Activated naive CD4-positive, alpha-beta T cell treated with anti-CD3 and anti-CD28 coated beads for 36 hours (primary cell): ENCODE measurements at regions of chr17 and their contacts with region 1.

Region 1: DNA sequence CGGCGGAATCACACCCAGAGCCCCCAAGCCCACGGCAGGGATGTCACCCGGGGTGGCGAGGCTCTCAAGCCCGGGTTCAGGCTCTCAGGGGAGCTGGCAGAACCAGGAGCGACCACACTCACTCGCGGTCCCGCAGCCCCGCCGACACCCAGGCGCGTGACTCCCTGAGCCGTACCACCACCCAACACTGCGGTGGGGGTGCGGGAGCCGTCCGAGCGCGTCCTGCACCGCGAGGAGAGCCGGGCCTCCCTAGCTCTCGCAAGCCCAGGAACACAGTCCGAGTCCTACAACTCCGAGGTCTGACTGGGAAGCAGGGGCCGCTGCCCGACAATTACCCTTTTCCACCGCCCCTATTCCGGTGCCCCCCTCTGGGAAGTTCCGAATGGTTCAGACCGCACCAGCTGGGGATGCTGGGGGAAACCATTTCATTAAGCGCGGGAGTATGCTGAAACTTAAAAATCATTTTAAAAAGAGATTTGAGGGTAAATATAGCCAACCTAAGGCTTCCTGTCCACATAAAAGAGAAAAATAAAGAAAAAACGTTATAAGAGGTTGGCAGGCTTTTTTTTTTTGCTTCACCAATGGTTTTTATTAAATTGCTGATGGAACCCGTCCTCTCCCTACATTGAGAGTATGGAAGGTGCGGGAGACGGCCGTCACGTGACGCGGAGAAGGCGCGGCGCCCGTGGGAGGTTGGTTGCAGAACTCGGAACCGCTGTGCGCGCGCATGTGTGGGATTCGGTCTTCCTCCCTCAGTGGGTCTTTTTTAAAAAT is at the start of gene FLCN:
- DNase-seq: peak; percentile 88
- H3K4me3 Mint-ChIP-seq: peak within 1 kb of the TSS; percentile 91
- H3K27ac Mint-ChIP-seq: peak within 1 kb of the TSS; percentile 95
- H3K4me1 Mint-ChIP-seq: peaks cover 31% of the 10 kb centered on the region
- H3K27me3 Mint-ChIP-seq: no peaks in the 10 kb centered on the region
- total RNA-seq, gene FLCN: 17.5 to 18.4 TPM

Region 2: DNA sequence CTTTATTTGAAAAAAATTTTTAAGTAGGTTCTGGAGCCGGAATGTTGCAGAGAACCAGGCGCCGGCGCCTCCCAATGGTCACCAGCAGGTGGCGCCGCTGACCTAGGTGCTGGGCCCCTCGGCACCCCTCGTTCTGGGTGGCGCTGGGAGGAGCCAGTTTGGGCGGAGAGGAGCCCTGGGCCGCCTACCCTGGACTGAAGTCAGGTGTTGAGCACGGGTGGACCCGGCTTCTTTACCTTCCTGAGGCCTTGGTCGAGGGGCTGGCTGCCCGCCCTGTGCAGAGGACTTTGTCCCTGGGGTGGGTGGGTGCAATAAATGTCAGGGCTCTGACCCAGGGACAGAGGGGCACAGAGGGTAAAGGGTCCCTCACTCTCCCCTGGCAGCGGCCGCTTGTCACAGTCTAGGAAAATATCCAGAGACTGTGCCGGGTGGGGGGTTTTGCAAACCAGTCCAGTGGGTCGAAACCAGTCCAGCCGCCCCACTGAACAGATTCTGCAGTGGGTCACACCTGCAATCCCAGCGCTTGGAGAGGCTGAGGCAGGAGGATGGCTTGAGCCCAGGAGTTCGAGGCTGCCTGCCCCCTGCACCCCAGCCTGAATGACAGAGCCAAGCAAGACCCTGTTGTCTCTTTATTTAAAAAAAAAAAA is 235.2 kb before region 1 on chr17:
- CTCF ChIA-PET with region 1: interaction called, 3 read pairs
- intact Hi-C with region 1: loop called (anchors 10 kb)
- DNase-seq: peak; percentile 75
- H3K4me3 Mint-ChIP-seq: no peak overlapping the region
- H3K27ac Mint-ChIP-seq: no peak overlapping the region
- H3K4me1 Mint-ChIP-seq: no peaks in the 10 kb centered on the region
- H3K27me3 Mint-ChIP-seq: no peaks in the 10 kb centered on the region

Region 3: GRCh38 chr17:17141860-17142552 is 95.2 kb before region 1 on chr17:
- CTCF ChIA-PET with region 1: interaction called, 3 read pairs
- intact Hi-C with region 1: loop called (anchors 1 kb)
- DNase-seq: peak; percentile 63
- H3K4me3 Mint-ChIP-seq: no peak overlapping the region
- H3K27ac Mint-ChIP-seq: no peak overlapping the region
- H3K4me1 Mint-ChIP-seq: peaks cover 6% of the 10 kb centered on the region
- H3K27me3 Mint-ChIP-seq: no peaks in the 10 kb centered on the region

Region 4: GRCh38 chr17:17151962-17152361 is 85.3 kb before region 1 on chr17:
- CTCF ChIA-PET with region 1: no interaction called
- intact Hi-C with region 1: loop called (anchors 2 kb)
- DNase-seq: peak; percentile 31
- H3K4me3 Mint-ChIP-seq: no peak overlapping the region
- H3K27ac Mint-ChIP-seq: no peak overlapping the region
- H3K4me1 Mint-ChIP-seq: peaks cover 49% of the 10 kb centered on the region
- H3K27me3 Mint-ChIP-seq: no peaks in the 10 kb centered on the region

Region 5: DNA sequence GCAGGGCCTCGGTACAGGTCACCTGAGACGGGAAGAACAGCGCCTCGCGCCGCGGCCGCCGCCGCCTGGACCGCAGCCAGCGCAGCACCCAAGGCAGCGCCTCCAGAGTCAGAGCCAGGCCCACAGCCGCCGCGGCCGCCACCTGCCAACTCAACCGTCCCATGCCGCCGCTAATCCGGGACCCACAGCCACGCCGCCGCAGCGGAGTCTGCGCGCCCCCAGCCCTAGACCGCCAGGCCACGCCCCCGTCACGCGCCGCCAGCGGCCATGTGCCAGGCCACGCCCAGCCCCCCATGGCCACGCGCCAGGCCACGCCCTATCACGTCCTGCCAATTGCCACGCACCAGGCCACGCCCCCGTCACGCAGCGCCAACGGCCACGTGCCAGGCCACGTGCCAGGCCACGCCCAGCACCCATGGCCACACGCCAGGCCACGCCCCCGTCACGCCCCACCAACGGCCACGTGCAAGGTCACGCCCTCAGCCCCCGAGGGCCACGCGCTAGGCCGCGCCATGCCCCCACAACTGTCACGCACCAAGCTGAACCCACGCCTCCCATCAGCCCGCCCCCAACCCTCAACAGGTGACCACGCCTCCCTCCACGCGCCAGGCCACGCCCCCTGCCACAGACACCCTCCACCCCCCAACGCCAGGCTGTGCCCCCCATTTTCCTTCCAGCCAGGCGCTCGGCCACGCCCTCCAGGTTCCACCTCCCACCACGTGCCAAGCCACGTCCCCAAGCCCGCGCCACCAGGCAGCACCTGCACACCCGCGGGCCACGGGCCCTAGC is 30.9 kb before region 1 on chr17 and contains the start of gene PLD6:
- CTCF ChIA-PET with region 1: interaction called, 3 read pairs
- intact Hi-C with region 1: loop called (anchors 1 kb)
- DNase-seq: peak; percentile 88
- H3K4me3 Mint-ChIP-seq: peak within 1 kb of the TSS; percentile 94
- H3K27ac Mint-ChIP-seq: peak within 1 kb of the TSS; percentile 90
- H3K4me1 Mint-ChIP-seq: peaks cover 27% of the 10 kb centered on the region
- H3K27me3 Mint-ChIP-seq: no peaks in the 10 kb centered on the region
- total RNA-seq, gene PLD6: 5.3 to 5.4 TPM

Region 6: GRCh38 chr17:17280613-17281549 is 43.7 kb after region 1 on chr17 and contains the start of gene COPS3:
- CTCF ChIA-PET with region 1: interaction called, 3 read pairs
- intact Hi-C with region 1: loop called (anchors 1 kb)
- DNase-seq: peak; percentile 99
- H3K4me3 Mint-ChIP-seq: peak within 1 kb of the TSS; percentile 94
- H3K27ac Mint-ChIP-seq: peak within 1 kb of the TSS; percentile 88
- H3K4me1 Mint-ChIP-seq: peaks cover 39% of the 10 kb centered on the region
- H3K27me3 Mint-ChIP-seq: no peaks in the 10 kb centered on the region
- total RNA-seq, gene COPS3: 103 to 104 TPM

Region 7: DNA sequence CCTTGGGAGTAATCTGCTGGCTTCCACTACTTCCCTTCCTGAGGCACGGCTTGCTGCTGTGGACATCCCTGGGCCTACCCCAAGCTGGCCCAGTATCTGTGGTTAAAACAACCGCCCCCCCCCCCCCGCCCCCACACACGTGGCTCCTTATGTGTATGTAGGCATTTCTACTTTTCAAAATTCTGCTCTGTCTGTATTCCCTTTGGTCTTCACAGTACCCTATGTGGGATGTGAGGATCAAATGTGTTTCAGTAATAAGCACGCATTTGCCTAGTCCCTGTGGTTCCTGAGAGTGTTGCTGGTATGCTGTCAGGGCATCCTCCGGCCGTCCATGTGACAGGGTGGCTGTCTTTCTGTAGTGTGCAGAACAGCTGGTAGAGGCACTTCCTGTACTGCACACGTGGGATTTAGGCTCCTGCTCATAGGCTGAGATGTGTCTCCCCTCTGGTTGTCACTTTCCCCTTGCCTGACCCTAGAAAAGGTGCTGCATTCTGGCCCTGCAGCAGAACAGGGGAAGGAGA is 68.1 kb after region 1 on chr17:
- CTCF ChIA-PET with region 1: no interaction called
- intact Hi-C with region 1: loop called (anchors 1 kb)
- DNase-seq: peak; percentile 68
- H3K4me3 Mint-ChIP-seq: peak overlapping the region; percentile 61
- H3K27ac Mint-ChIP-seq: peak overlapping the region; percentile 37
- H3K4me1 Mint-ChIP-seq: peaks cover 28% of the 10 kb centered on the region
- H3K27me3 Mint-ChIP-seq: no peaks in the 10 kb centered on the region